ENCODE measurements at regions of chr16 and their contacts with region 1.

Region 1: DNA sequence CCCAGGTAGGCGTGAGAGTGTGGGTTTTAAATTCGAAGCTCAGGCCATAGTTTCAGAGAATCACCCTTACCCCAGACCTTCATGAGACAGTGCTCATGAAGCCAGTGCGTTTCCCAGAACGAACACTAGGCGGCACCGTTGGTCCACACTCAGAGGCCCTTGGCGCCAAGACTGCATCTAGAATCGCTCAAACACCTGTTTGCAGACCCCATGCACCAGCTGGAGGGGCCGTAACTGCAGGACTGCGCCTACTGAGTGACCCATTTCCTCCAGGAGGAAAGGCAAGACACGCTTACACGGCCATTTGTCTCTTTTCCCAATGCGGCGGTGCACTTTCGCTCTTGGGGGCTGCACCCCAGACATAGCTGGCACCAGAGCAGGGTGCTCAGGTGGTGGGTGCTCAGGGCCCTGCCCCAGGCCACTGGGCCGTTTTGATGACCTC is 34.0 kb downstream of the ADGRG5 start:
- DNase-seq: peak; percentile 89
- ATAC-seq: peak; percentile 91
- H3K4me3 Mint-ChIP-seq: no peak overlapping the region
- H3K27ac Mint-ChIP-seq: no peak overlapping the region
- H3K4me1 Mint-ChIP-seq: no peaks in the 10 kb centered on the region
- H3K27me3 Mint-ChIP-seq: peaks cover 13% of the 10 kb centered on the region
- CTCF ChIP-seq: peak; percentile 95

Region 2: DNA sequence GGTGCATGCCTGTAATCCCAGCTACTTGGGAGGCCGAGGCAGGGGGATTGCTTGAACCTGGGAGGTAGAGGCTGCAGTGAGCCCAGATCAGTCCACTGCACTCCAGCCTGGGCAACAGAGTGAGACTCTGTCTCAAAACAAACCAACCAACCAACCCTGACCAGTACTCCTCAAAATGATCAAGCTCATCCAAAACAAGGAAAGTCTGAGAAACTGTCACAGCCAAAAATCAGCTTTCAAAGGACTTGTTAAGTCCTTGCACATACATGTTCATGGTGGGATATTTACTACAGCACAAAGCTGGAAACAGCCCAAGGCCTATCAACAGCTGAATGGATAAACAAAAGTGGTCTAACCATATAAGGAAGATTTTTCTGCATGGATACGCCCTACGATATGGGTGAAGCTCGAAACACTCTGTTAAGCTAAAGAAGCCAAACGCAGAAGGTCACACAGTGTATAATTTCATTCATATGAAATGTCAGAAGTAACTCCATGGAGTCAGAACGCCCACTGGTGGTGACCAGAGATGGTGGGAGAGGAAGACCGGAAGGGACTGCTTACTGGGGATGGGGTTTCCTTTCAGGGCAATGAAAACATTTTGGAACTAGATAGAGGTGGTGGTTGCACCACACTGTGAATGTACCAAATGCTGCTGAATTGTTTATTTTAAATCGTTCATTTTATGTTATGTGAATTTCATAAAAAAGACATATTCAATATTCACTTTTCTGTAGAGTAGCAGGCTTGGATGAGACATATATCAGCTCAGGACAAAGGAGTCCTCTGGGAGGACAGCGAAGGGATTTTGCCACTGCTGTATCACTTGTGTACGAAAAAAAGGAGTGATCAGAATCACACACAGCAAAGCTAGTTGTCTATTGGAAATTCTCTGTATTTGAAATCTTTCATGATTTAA is 154.2 kb before region 1 on chr16:
- CTCF ChIA-PET with region 1: interaction called, 12 read pairs
- POLR2A ChIA-PET with region 1: no interaction called
- DNase-seq: peak; percentile 50
- ATAC-seq: peak; percentile 37
- H3K4me3 Mint-ChIP-seq: no peak overlapping the region; the same call in 1 of the 2 replicates
- H3K27ac Mint-ChIP-seq: no peak overlapping the region; the same call in 1 of the 2 replicates
- H3K4me1 Mint-ChIP-seq: peaks cover 26% of the 10 kb centered on the region
- H3K27me3 Mint-ChIP-seq: no peaks in the 10 kb centered on the region
- CTCF ChIP-seq: no peak; the same call in 1 of the 2 replicates

Region 3: GRCh38 chr16:57535680-57536305 is 40.7 kb before region 1 on chr16:
- CTCF ChIA-PET with region 1: interaction called, 12 read pairs
- POLR2A ChIA-PET with region 1: no interaction called
- DNase-seq: peak; percentile 98
- ATAC-seq: peak; percentile 88
- H3K4me3 Mint-ChIP-seq: peak overlapping the region; percentile 70
- H3K27ac Mint-ChIP-seq: peak overlapping the region; percentile 53; the same call in 1 of the 2 replicates
- H3K4me1 Mint-ChIP-seq: peaks cover 60% of the 10 kb centered on the region
- H3K27me3 Mint-ChIP-seq: peaks cover 31% of the 10 kb centered on the region
- CTCF ChIP-seq: no peak

Region 4: GRCh38 chr16:57609541-57610401 is 33.3 kb after region 1 on chr16:
- CTCF ChIA-PET with region 1: interaction called, 13 read pairs
- POLR2A ChIA-PET with region 1: no interaction called
- DNase-seq: no peak
- ATAC-seq: peak; percentile 22
- H3K4me3 Mint-ChIP-seq: no peak overlapping the region
- H3K27ac Mint-ChIP-seq: no peak overlapping the region
- H3K4me1 Mint-ChIP-seq: no peaks in the 10 kb centered on the region
- H3K27me3 Mint-ChIP-seq: no peaks in the 10 kb centered on the region
- CTCF ChIP-seq: no peak

Region 5: DNA sequence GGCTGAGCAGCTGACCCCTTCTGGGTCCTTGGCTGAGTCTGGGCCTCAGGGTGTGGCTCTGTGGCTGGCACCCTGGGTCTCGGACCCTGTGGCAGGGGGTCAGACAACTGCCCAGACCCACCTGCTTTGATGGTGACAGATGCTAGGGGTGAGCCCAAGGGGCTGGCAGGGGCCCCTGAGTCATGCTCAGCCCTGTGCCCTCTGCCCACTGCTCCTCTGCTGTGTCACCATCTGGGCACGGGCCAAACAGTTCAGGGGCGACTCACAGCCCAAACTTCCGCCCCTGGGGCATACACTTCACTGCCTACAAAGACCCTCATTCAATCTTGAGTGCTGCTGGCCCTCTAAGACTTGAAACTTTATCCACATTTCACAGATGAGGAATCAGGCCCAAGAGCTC is 57.7 kb after region 1 on chr16:
- CTCF ChIA-PET with region 1: interaction called, 11 read pairs
- POLR2A ChIA-PET with region 1: no interaction called
- DNase-seq: no peak
- ATAC-seq: no peak
- H3K4me3 Mint-ChIP-seq: no peak overlapping the region
- H3K27ac Mint-ChIP-seq: no peak overlapping the region
- H3K4me1 Mint-ChIP-seq: peaks cover 3% of the 10 kb centered on the region
- H3K27me3 Mint-ChIP-seq: peaks cover 4% of the 10 kb centered on the region
- CTCF ChIP-seq: no peak

Region 6: GRCh38 chr16:57734925-57735754 is 158.7 kb after region 1 on chr16:
- CTCF ChIA-PET with region 1: interaction called, 11 read pairs
- POLR2A ChIA-PET with region 1: no interaction called
- DNase-seq: peak; percentile 100
- ATAC-seq: peak; percentile 92
- H3K4me3 Mint-ChIP-seq: peak overlapping the region; percentile 98
- H3K27ac Mint-ChIP-seq: peak overlapping the region; percentile 99
- H3K4me1 Mint-ChIP-seq: peaks cover 16% of the 10 kb centered on the region
- H3K27me3 Mint-ChIP-seq: peaks cover 3% of the 10 kb centered on the region; the same call in 1 of the 2 replicates
- CTCF ChIP-seq: no peak

Measured in WTC11 (cell line).